ENCODE measurements at regions of chr2 and their contacts with region 1.

Region 1: DNA sequence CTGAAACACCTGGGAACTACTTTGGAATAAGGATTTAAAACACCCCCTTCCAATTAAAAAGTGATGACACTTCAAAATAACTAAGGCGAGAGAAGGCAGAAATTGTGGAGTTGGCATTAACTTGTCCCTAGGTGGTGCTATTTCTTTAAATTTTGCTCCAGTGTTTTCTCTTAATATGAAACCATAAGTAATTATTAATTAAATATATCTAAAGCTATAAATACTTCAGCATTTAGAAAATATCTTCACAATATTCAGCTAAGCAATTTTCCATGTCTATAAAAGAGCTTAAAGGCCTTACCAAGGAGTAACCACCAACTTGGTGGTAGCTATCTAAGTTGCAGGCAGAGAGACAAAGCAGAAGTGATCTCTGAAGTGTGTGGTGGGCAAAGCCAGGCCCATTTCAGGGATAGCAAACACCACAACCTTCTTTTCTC is 186.8 kb upstream of the PGAP1 start:
- DNase-seq: no peak
- H3K4me3 ChIP-seq: no peak overlapping the region
- H3K27ac ChIP-seq: no peak overlapping the region
- H3K4me1 ChIP-seq: peaks cover 0 to 8% (median 2%) of the 10 kb centered on the region in 4 donors
- H3K27me3 ChIP-seq: no peaks in the 10 kb centered on the region
- CTCF ChIP-seq: peak; percentile 28 to 59 (median 52)
- EP300 ChIP-seq: no peak
- POLR2A ChIP-seq: no peak

Region 2: DNA sequence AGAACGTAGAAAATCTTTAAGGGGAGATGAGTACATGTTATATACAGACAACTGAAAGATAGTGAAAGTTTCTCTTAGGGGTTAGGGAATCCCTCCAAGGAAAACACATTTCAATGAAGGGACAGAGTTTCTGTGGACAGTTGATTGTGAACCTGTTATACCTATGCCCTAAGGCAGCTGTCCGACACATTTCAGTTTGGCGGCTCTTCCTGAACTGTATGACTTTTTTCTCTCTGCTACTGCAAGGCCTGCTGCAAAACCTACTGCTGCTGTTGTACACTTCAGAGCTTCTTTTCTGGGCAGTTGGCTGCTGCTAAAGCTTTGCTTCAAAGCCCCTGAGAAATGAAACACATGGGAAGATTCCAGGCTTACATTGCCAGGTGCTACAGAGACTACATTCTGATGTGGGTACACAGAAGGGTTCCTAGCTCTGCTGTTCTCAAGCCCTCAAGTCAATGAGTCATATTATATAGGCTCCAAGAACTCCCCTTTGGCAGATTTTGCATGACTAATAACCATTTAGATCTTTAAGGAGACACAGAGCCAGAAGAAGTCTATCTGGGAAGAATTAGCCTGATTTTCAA is 174.0 kb before region 1 on chr2:
- intact Hi-C with region 1: no loop called
- DNase-seq: no peak
- H3K4me3 ChIP-seq: no peak overlapping the region
- H3K27ac ChIP-seq: no peak overlapping the region
- H3K4me1 ChIP-seq: no peaks in the 10 kb centered on the region
- H3K27me3 ChIP-seq: no peaks in the 10 kb centered on the region
- CTCF ChIP-seq: no peak
- EP300 ChIP-seq: no peak
- POLR2A ChIP-seq: no peak

Region 3: DNA sequence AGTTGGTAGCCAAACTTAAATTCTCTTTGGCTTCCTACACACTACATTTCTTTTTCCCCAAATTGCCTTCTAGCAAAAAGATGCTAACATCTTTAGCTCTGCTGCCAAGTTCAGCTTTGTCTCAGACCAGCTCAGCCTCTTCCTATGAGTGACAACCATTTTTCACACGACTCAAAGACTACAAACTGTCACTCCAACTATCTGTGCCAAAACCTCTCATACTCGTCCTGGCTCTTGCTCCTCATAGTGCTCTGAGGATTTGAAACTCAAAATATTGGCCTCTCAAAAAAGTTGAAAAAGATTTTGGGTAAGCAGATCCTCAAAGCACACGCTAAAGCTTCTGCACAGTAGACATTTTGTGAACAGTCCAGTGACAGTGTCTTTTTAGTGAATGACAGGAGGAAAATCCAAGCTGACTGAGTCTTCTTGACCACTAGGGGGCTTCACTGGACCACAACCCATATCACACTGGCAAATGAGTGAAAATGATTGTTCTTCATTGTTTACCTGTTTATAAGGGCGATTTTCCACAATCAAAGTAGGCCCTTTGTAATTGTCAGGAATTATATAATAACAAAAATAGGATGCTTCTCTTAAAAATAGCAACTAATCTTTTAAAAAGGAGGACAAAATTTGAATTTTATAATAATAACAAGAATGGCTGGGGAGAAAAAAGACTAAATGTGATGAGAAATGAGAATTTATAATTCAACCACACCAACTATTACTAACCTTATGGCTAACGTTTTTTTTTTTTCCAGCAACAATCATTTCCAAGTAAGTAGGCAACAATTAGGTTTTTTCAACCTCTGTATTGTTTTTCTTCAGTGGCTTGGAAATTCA is 101.3 kb before region 1 on chr2:
- intact Hi-C with region 1: loop called (anchors 2 kb)
- DNase-seq: no peak
- H3K4me3 ChIP-seq: no peak overlapping the region
- H3K27ac ChIP-seq: no peak overlapping the region
- H3K4me1 ChIP-seq: no peaks in the 10 kb centered on the region
- H3K27me3 ChIP-seq: no peaks in the 10 kb centered on the region
- CTCF ChIP-seq: peak; percentile 23 to 71 (median 66)
- EP300 ChIP-seq: no peak
- POLR2A ChIP-seq: no peak

Region 4: GRCh38 chr2:197168705-197169104 is 55.4 kb after region 1 on chr2:
- intact Hi-C with region 1: loop called (anchors 10 kb)
- DNase-seq: peak; percentile 78
- H3K4me3 ChIP-seq: no peak overlapping the region
- H3K27ac ChIP-seq: peak overlapping the region in 2 of 4 donors; percentile 2 to 76
- H3K4me1 ChIP-seq: peaks cover 0 to 46% (median 39%) of the 10 kb centered on the region in 4 donors
- H3K27me3 ChIP-seq: no peaks in the 10 kb centered on the region
- CTCF ChIP-seq: peak in 2 of 4 experiments; percentile 21 to 41
- EP300 ChIP-seq: no peak
- POLR2A ChIP-seq: no peak

Region 5: GRCh38 chr2:197184959-197185586 is 71.8 kb after region 1 on chr2:
- intact Hi-C with region 1: loop called (anchors 5 kb)
- DNase-seq: peak; percentile 73
- H3K4me3 ChIP-seq: no peak overlapping the region
- H3K27ac ChIP-seq: peak overlapping the region in 1 of 4 donors; percentile 1
- H3K4me1 ChIP-seq: peaks cover 0 to 21% (median 12%) of the 10 kb centered on the region in 4 donors
- H3K27me3 ChIP-seq: no peaks in the 10 kb centered on the region
- CTCF ChIP-seq: no peak
- EP300 ChIP-seq: no peak
- POLR2A ChIP-seq: no peak

Region 6: DNA sequence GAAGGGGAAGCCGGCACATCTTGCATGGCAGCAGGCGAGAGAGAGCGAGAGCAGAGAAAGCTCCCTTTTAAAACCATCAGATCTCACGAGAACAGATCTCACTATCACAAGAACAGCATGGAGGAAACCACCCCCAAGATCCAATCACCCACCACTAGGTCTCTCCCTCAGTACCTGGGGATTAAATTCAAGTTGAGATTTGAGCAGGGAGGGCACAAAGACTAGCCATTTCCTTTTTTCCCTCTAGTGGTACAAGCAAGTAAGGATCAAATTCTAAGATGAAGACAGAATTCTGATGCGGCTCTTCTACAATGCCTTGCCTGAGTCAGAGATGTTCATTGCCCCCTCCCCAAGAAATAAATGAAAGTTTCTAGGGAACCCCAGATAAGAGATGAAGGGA is 242.8 kb after region 1 on chr2:
- intact Hi-C with region 1: no loop called
- DNase-seq: no peak
- H3K4me3 ChIP-seq: no peak overlapping the region
- H3K27ac ChIP-seq: no peak overlapping the region
- H3K4me1 ChIP-seq: no peaks in the 10 kb centered on the region
- H3K27me3 ChIP-seq: no peaks in the 10 kb centered on the region
- CTCF ChIP-seq: no peak
- EP300 ChIP-seq: no peak
- POLR2A ChIP-seq: no peak

Region 7: DNA sequence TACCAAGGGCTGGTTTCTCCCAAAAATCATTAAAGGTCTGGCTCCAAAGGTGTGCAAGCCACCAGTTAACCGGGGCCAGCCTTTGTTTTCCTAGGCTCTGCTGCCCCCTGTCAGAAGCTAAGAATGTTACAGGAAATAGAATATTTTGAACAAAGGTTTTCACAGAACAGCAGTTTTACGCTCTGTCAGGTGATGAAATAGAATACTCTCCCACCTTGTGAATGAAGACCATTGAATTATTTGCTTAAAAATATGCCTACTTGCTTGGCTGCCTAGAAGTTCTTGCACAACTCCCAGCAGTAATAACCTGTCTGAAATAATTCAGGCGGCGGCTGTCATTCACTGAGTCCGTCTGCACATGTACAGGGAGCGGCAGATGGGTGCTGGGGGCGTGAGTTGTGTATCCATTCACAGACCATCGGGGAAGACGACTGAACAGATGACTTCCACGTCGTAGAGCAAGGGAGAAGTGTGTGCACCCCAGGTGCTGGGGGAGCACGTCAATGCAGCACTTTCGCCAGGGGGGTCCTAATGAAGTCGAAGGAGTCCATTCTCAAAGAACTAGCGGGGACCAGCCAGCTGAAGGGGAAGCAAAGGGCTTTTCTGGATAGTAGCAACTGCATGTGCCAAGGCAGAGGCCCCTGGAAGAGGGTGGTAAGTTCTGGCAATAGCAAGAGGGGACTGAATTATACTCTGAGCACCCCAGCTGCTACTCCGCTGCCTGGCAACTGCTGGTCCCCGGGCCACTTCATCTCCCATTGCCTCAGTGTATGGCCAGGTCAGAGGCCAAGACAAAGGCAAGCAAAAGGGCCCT is 265.4 kb after region 1 on chr2:
- intact Hi-C with region 1: loop called (anchors 1 kb)
- DNase-seq: no peak
- H3K4me3 ChIP-seq: no peak overlapping the region
- H3K27ac ChIP-seq: no peak overlapping the region
- H3K4me1 ChIP-seq: peaks cover 0 to 8% (median 3%) of the 10 kb centered on the region in 4 donors
- H3K27me3 ChIP-seq: no peaks in the 10 kb centered on the region
- CTCF ChIP-seq: peak; percentile 54 to 71 (median 62)
- EP300 ChIP-seq: no peak
- POLR2A ChIP-seq: no peak